ENCODE measurements at regions of chr6 and their contacts with region 1.

Region 1: DNA sequence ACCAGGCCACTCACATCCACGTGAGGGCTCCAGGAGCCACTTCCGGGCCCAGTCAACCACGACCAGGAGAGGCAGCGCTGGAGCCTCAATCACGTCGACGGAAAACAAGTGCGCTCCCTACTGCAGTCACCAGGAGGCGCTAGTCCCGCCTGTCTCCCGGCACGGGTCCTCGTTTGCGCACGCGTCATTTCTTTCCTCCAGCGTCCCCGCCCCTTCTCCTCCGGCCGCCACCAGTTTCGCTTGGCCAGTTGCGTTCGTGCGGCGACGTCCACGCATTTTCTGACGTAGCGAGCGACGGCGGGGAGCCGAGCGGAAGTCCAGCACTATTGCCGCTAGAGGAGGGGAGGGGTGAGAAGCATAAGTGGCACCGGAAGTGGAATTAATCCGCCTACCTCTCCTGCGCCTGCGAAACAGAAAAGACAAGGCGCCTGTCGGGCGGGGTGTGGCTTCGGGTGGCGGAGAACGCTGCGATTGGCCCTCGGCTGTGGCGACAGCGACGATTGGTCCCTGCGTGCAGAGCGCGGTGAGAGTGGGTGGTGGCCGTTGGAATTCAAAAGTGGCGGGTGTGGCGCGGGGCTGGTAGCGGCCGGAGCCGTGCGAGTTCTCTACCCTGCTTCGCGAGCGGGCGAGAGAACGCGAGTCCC is at the start of gene KIFC1:
- DNase-seq: peak; percentile 94 to 99 (median 99)
- ATAC-seq: peak; percentile 92
- H3K4me3 ChIP-seq: peak within 1 kb of the TSS; percentile 58
- H3K4me3 Mint-ChIP-seq: peak within 1 kb of the TSS; percentile 82 to 93 (median 85)
- H3K27ac ChIP-seq: peak within 1 kb of the TSS; percentile 81
- H3K27ac Mint-ChIP-seq: peak within 1 kb of the TSS; percentile 94 to 98 (median 97)
- H3K4me1 ChIP-seq: peaks cover 13% of the 10 kb centered on the region in 2 donors
- H3K4me1 Mint-ChIP-seq: peaks cover 11 to 47% (median 22%) of the 10 kb centered on the region in 7 donors
- H3K27me3 ChIP-seq: no peaks in the 10 kb centered on the region
- H3K27me3 Mint-ChIP-seq: peaks cover 0 to 5% (median 0%) of the 10 kb centered on the region in 5 donors
- total RNA-seq, gene KIFC1: 0.65 to 87.9 (median 1.6) TPM

Region 2: GRCh38 chr6:32127717-32128592 is 1263.4 kb before region 1 on chr6 and contains the start of gene ATF6B:
- CTCF ChIA-PET with region 1: no interaction called
- POLR2A ChIA-PET with region 1: no interaction called
- intact Hi-C with region 1: loop called in 1 of 2 experiments (anchors 5 kb)
- DNase-seq: peak; percentile 80 to 100 (median 96)
- ATAC-seq: peak; percentile 97
- H3K4me3 ChIP-seq: peak within 1 kb of the TSS; percentile 96
- H3K4me3 Mint-ChIP-seq: peak within 1 kb of the TSS; percentile 96 to 100 (median 98)
- H3K27ac ChIP-seq: peak within 1 kb of the TSS; percentile 92
- H3K27ac Mint-ChIP-seq: peak within 1 kb of the TSS; percentile 83 to 98 (median 97)
- H3K4me1 ChIP-seq: peaks cover 33% of the 10 kb centered on the region in 2 donors
- H3K4me1 Mint-ChIP-seq: peaks cover 38 to 66% (median 53%) of the 10 kb centered on the region in 7 donors
- H3K27me3 ChIP-seq: no peaks in the 10 kb centered on the region
- H3K27me3 Mint-ChIP-seq: peaks cover 0 to 4% (median 0%) of the 10 kb centered on the region in 5 donors
- total RNA-seq, gene ATF6B: 115 to 168 (median 142) TPM

Region 3: GRCh38 chr6:33299237-33299944 is 92.0 kb before region 1 on chr6:
- CTCF ChIA-PET with region 1: no interaction called
- POLR2A ChIA-PET with region 1: interaction called, 4 read pairs
- intact Hi-C with region 1: loop called (anchors 1 to 2 kb)
- DNase-seq: peak; percentile 89 to 96 (median 93)
- ATAC-seq: peak; percentile 88
- H3K4me3 ChIP-seq: peak overlapping the region; percentile 78
- H3K4me3 Mint-ChIP-seq: peak overlapping the region; percentile 95 to 100 (median 99)
- H3K27ac ChIP-seq: peak overlapping the region; percentile 92
- H3K27ac Mint-ChIP-seq: peak overlapping the region; percentile 95 to 100 (median 99)
- H3K4me1 ChIP-seq: peaks cover 5 to 10% of the 10 kb centered on the region in 2 donors
- H3K4me1 Mint-ChIP-seq: peaks cover 25 to 48% (median 38%) of the 10 kb centered on the region in 7 donors
- H3K27me3 ChIP-seq: no peaks in the 10 kb centered on the region
- H3K27me3 Mint-ChIP-seq: peaks cover 0 to 3% (median 0%) of the 10 kb centered on the region in 5 donors

Region 4: DNA sequence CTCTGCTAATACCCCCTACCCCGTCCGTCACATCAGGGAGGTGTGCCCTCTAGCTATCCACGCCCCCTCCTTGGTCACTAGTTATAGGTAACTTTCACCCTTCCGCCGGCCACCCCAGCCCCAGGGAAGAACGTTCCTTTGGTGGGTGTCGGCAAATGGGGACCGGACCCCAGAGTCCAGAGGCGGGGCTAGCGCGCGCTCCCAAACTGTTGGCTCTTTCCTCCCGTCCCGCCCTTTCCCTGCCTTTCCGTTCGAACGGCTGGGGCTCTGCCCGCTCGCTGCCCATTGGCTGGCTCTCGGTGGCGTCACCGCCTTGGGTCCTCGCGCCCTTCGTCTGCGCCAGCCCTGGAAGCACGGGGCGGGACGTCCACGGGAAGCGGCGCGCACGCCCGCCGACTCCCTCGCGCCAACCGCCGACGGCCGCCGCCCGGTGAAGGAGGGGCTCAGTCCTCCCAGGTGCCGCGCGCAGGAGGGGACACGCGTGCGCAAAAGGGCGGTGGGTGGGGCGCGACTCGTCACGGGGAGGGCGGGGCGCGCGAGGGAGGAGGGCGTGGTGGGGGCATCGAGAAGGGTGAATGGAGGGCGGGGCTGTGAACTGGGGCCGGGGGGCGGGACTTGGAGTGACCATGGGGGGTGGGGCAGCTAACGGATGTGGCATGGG is 18.8 kb after region 1 on chr6:
- CTCF ChIA-PET with region 1: no interaction called
- POLR2A ChIA-PET with region 1: interaction called, 11 read pairs
- intact Hi-C with region 1: loop called (anchors 1 kb)
- DNase-seq: peak; percentile 94 to 98 (median 95)
- ATAC-seq: peak; percentile 82
- H3K4me3 ChIP-seq: peak overlapping the region; percentile 78
- H3K4me3 Mint-ChIP-seq: peak overlapping the region; percentile 85 to 95 (median 90)
- H3K27ac ChIP-seq: peak overlapping the region; percentile 100
- H3K27ac Mint-ChIP-seq: peak overlapping the region; percentile 65 to 99 (median 97)
- H3K4me1 ChIP-seq: peaks cover 35 to 36% of the 10 kb centered on the region in 2 donors
- H3K4me1 Mint-ChIP-seq: peaks cover 25 to 60% (median 46%) of the 10 kb centered on the region in 7 donors
- H3K27me3 ChIP-seq: no peaks in the 10 kb centered on the region
- H3K27me3 Mint-ChIP-seq: no peaks in the 10 kb centered on the region

Region 5: GRCh38 chr6:33454009-33454946 is 62.9 kb after region 1 on chr6 and contains the start of gene ZBTB9:
- CTCF ChIA-PET with region 1: no interaction called
- POLR2A ChIA-PET with region 1: interaction called, 7 read pairs
- intact Hi-C with region 1: loop called (anchors 1 kb)
- DNase-seq: peak; percentile 80 to 93 (median 92)
- ATAC-seq: peak; percentile 100
- H3K4me3 ChIP-seq: peak within 1 kb of the TSS; percentile 93
- H3K4me3 Mint-ChIP-seq: peak within 1 kb of the TSS; percentile 88 to 99 (median 95)
- H3K27ac ChIP-seq: peak within 1 kb of the TSS; percentile 88
- H3K27ac Mint-ChIP-seq: peak within 1 kb of the TSS; percentile 86 to 98 (median 92)
- H3K4me1 ChIP-seq: peaks cover 12 to 22% of the 10 kb centered on the region in 2 donors
- H3K4me1 Mint-ChIP-seq: peaks cover 21 to 57% (median 45%) of the 10 kb centered on the region in 7 donors
- H3K27me3 ChIP-seq: no peaks in the 10 kb centered on the region
- H3K27me3 Mint-ChIP-seq: no peaks in the 10 kb centered on the region
- total RNA-seq, gene ZBTB9: 3.3 to 14.0 (median 9.8) TPM

Region 6: DNA sequence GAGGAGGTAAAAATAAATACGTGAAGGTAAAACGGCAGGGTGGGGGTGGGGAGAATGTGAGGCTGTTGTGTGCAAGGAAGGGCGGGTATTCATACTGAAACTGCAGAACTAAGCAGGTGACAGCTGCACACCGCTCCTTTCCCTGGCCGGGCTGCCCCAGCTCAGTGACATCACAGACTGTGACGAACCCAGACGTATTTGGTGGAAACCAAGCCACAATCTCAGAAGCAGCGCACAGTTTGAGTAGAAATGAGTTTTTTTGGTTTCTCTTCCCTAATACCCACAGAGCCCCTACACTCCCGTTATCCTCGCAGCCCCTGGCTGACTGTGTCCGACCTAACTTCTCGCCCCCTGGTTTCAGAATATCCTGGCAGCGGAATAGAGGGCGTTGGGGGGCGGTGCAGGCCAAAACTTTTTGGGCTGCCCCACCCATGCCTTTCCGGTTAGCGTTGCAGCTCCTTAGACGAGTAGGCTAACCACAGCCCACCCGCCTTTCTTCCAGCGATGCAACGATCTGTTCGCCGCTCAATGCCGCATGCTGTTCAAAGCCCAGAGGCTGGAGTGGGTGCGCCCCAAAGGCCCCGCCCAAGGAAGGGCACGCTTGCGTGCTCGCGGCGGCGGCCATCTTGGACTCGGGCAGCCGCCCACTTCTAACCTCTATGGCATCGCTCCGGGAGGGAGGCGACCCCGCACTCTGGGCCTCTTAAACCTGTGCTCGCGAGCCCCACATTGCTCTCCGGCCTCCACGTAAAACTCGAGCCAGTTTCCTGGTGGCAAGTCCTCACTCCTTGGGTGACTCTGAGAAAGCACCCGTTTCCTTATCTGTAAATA is 179.6 kb after region 1 on chr6:
- CTCF ChIA-PET with region 1: no interaction called
- POLR2A ChIA-PET with region 1: interaction called, 5 read pairs
- intact Hi-C with region 1: loop called (anchors 1 kb)
- DNase-seq: peak; percentile 81 to 98 (median 95)
- ATAC-seq: peak; percentile 91
- H3K4me3 ChIP-seq: peak overlapping the region; percentile 85
- H3K4me3 Mint-ChIP-seq: peak overlapping the region; percentile 80 to 99 (median 94)
- H3K27ac ChIP-seq: peak overlapping the region; percentile 98
- H3K27ac Mint-ChIP-seq: peak overlapping the region; percentile 99 to 100 (median 100)
- H3K4me1 ChIP-seq: peaks cover 19 to 21% of the 10 kb centered on the region in 2 donors
- H3K4me1 Mint-ChIP-seq: peaks cover 8 to 57% (median 31%) of the 10 kb centered on the region in 7 donors
- H3K27me3 ChIP-seq: no peaks in the 10 kb centered on the region
- H3K27me3 Mint-ChIP-seq: peaks cover 0 to 3% (median 0%) of the 10 kb centered on the region in 5 donors

Region 7: DNA sequence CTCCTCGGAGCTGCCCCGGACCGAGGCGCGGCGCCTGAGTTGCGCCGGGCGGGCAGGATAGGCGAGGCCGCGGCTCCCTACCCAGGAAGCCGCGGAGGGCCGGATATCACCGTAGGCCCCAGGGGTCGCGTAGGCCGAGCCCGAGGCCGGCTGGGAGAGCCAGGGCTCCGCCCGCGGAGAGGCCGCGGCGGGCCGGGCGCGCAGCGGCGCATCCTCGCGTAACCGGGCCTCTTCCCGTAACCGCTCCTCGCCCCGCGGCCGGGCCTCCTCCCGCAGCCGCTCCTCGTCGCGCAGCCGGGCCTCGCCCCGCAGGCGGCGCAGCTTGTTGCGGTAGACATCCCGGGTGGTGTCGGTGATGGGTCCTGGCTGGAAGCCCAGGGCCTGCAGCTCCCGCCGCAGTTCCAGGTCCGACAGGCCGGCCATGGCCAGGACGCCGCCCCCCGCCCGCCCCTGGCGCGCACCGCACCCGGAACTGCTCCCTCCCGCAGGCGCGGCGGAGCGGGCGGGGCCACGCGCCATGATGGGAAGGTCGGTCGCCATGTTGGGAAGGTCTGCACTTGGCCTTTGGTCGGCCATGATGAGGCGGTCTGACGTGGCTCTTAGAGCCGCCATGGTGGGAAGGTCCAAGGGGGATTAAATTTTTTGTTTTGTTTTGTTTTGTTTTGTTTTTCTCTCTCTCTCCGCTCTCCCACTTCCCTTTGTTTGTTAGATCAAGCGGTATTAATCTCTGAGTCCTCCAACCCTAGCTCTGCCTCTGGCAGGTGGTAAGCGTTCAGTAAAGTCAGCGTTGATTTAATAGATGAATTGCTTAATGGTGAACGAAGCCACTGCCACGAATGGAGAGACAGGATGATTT is 397.5 kb after region 1 on chr6 and contains the start of gene LEMD2:
- CTCF ChIA-PET with region 1: no interaction called
- POLR2A ChIA-PET with region 1: no interaction called
- intact Hi-C with region 1: loop called in 1 of 2 experiments (anchors 2 kb)
- DNase-seq: peak; percentile 88 to 96 (median 91)
- ATAC-seq: peak; percentile 94
- H3K4me3 ChIP-seq: peak within 1 kb of the TSS; percentile 80
- H3K4me3 Mint-ChIP-seq: peak within 1 kb of the TSS; percentile 93 to 100 (median 98)
- H3K27ac ChIP-seq: peak within 1 kb of the TSS; percentile 92
- H3K27ac Mint-ChIP-seq: peak within 1 kb of the TSS; percentile 95 to 99 (median 97)
- H3K4me1 ChIP-seq: peaks cover 37 to 40% of the 10 kb centered on the region in 2 donors
- H3K4me1 Mint-ChIP-seq: peaks cover 40 to 55% (median 51%) of the 10 kb centered on the region in 7 donors
- H3K27me3 ChIP-seq: no peaks in the 10 kb centered on the region
- H3K27me3 Mint-ChIP-seq: peaks cover 0 to 25% (median 0%) of the 10 kb centered on the region in 5 donors
- total RNA-seq, gene LEMD2: 71.4 to 124 (median 118) TPM

Measured in naive thymus-derived CD4-positive, alpha-beta T cell (primary cell).